ENCODE measurements at regions of chr17 and their contacts with region 1.

Region 1: DNA sequence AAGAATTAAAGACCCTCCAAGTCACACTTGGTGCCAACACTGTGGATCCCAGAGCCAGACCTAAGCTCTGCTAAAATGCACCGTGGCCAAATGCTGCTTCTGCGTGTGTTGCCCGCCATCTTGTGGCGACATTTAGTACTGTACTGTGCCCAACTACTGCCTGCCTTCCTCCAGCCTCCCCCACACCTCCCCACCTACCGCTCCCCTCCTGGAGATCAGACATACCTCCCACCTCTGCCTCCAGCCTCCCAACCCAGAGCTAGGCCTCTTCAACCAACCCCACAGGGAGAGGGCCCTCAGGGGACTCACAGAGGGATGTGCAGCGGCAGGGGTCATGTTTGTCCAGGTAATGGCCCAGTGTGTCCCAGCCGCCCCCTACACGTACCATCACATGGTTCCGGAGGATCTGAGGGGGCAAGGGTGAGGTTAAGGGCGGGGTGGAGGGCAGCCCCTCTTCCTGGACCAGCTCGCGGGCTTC is 5.5 kb downstream of the GAS2L2 start:
- DNase-seq: peak; percentile 67
- H3K4me3 ChIP-seq: no peak overlapping the region
- H3K27ac ChIP-seq: no peak overlapping the region
- H3K4me1 ChIP-seq: no peaks in the 10 kb centered on the region
- H3K27me3 ChIP-seq: no peaks in the 10 kb centered on the region
- CTCF ChIP-seq: peak; percentile 68

Region 2: GRCh38 chr17:35170968-35171771 is 576.4 kb before region 1 on chr17:
- CTCF ChIA-PET with region 1: no interaction called
- POLR2A ChIA-PET with region 1: no interaction called
- intact Hi-C with region 1: loop called (anchors 5 kb)
- DNase-seq: peak; percentile 37
- H3K4me3 ChIP-seq: no peak overlapping the region
- H3K27ac ChIP-seq: no peak overlapping the region
- H3K4me1 ChIP-seq: no peaks in the 10 kb centered on the region
- H3K27me3 ChIP-seq: no peaks in the 10 kb centered on the region
- CTCF ChIP-seq: peak; percentile 36; the same call in 1 of the 2 replicates

Region 3: GRCh38 chr17:35312790-35313711 is 434.5 kb before region 1 on chr17:
- CTCF ChIA-PET with region 1: no interaction called
- POLR2A ChIA-PET with region 1: no interaction called
- intact Hi-C with region 1: loop called (anchors 10 kb)
- DNase-seq: peak; percentile 64
- H3K4me3 ChIP-seq: no peak overlapping the region
- H3K27ac ChIP-seq: peak overlapping the region; percentile 61
- H3K4me1 ChIP-seq: peaks cover 5% of the 10 kb centered on the region
- H3K27me3 ChIP-seq: no peaks in the 10 kb centered on the region
- CTCF ChIP-seq: peak; percentile 66

Region 4: DNA sequence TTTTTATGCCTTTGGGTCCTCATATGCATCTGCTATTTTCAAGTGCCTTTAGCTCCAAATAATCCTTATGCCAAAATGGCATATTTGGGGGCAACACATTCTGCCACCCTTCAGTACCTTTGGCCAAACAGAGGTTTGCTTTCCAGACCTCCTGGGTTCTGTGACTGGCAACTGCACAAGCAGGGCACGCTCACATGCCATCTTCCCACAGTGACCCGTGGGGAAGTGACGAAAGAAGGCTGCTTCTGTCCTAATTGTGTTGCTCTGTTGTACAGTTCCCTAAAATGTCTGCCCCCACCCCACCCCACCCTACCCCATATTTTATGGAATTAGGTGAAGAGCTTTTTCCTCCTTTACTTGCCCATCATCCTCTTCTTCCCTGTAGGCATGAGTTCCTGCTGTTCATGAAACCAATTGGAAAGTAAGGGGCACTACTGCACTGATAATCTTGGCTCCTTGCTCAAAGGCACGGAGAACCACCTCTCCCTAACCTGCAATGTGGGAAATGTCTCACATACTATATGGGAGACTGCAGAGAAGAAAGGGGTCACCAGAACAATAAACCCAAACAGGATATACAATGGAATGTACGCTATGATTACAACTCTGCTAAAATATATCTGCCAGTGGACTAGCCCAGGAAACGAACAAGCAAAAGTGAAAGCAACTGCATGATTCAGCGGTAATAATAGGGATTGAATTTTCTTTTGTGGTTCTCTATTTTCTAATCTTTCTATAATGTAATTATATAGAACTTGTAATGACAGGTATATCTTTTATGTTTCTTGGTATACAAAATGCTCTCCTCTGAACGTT is 206.8 kb before region 1 on chr17:
- CTCF ChIA-PET with region 1: no interaction called
- POLR2A ChIA-PET with region 1: no interaction called
- intact Hi-C with region 1: loop called (anchors 5 kb)
- DNase-seq: peak; percentile 17
- H3K4me3 ChIP-seq: peak overlapping the region; percentile 30
- H3K27ac ChIP-seq: peak overlapping the region; percentile 50
- H3K4me1 ChIP-seq: peaks cover 9% of the 10 kb centered on the region
- H3K27me3 ChIP-seq: no peaks in the 10 kb centered on the region
- CTCF ChIP-seq: no peak

Region 5: DNA sequence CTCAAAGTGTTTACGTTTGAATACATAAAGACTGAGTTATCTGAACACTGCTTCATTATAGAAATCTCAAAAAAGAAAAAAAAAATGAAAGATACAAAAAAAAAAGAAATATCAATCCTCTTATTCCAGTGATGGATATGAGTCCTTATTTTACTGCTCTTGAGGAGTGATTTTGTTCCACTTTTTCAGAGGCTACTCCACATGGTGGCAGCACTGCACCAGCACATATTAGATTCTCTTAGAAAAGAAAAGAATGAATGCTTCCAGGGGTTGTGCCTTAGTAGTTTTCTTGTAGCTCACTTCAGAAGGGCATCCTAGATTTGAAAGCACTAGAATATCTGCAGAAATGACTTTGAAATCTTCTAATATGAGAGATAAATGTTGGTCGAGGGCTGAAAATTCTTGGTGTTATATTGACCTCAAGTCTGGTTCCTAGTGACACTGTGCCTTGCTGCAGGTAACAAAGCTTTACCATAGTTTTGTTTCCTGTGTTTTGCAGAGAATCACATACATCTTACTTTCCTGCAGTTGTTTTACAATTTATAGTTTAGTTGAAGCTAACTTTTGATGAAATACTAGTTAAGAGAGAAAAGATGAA is 134.6 kb before region 1 on chr17:
- CTCF ChIA-PET with region 1: interaction called, 17 read pairs
- POLR2A ChIA-PET with region 1: no interaction called
- intact Hi-C with region 1: loop called (anchors 2 kb)
- DNase-seq: peak; percentile 48
- H3K4me3 ChIP-seq: no peak overlapping the region
- H3K27ac ChIP-seq: no peak overlapping the region
- H3K4me1 ChIP-seq: no peaks in the 10 kb centered on the region
- H3K27me3 ChIP-seq: no peaks in the 10 kb centered on the region
- CTCF ChIP-seq: peak; percentile 61